Heart left ventricle (tissue), 16 donors: ENCODE measurements at regions of chr3 and their contacts with region 1.

Region 1: GRCh38 chr3:52056968-52057805 is 816 bp upstream of the DUSP7 start:
- DNase-seq: peak; percentile 99 to 100 (median 100)
- ATAC-seq: peak; percentile 87 to 94 (median 90)
- H3K4me3 ChIP-seq: peak overlapping the region; percentile 36 to 96 (median 66)
- H3K27ac ChIP-seq: peak overlapping the region; percentile 30 to 95 (median 90)
- H3K4me1 ChIP-seq: peaks cover 12 to 55% (median 31%) of the 10 kb centered on the region in 12 donors
- H3K27me3 ChIP-seq: no peaks in the 10 kb centered on the region
- CTCF ChIP-seq: peak in 3 of 12 donors; percentile 10 to 28 (median 17)
- POLR2A ChIP-seq: peak in 1 of 2 donors; percentile 68

Region 2: DNA sequence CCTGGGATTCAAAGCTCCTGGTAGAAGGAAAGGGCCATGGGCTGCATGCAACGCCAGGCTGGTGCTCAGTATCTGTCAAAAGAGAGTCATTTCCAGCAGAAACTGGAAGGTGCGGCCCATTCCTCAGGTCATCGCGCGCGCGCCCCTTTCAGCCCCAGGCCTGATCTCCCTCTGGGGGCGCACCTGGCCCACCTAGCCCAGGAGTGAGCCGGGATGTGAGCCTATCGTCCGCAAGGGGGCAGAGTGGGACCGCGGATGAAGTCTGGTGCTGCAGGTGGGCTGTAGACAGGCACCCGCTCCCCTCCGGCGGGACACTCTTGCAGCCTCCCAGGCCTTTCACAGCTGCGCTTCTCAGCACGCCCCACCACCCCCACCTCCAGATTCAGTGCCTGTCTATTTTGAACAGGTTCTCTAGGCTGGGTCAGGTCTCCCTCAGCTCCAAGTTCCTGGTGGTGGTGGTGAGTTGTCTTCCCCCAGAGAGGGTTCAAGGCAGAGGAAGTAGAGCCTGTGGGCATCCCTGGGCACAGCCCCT is 55.7 kb before region 1 on chr3:
- intact Hi-C with region 1: loop called (anchors 1 to 5 kb)
- DNase-seq: peak; percentile 69 to 88 (median 74)
- ATAC-seq: peak; percentile 35 to 67 (median 63)
- H3K4me3 ChIP-seq: no peak overlapping the region
- H3K27ac ChIP-seq: no peak overlapping the region
- H3K4me1 ChIP-seq: peaks cover 13 to 34% (median 31%) of the 10 kb centered on the region in 12 donors
- H3K27me3 ChIP-seq: no peaks in the 10 kb centered on the region
- CTCF ChIP-seq: peak; percentile 76 to 96 (median 90)
- POLR2A ChIP-seq: no peak

Region 3: GRCh38 chr3:52014613-52015012 is 42.6 kb before region 1 on chr3:
- intact Hi-C with region 1: loop called in 2 of 10 experiments (anchors 5 kb)
- DNase-seq: no peak
- ATAC-seq: no peak
- H3K4me3 ChIP-seq: no peak overlapping the region
- H3K27ac ChIP-seq: no peak overlapping the region
- H3K4me1 ChIP-seq: peaks cover 12 to 64% (median 34%) of the 10 kb centered on the region in 12 donors
- H3K27me3 ChIP-seq: no peaks in the 10 kb centered on the region
- CTCF ChIP-seq: peak in 4 of 12 donors; percentile 9 to 20 (median 18)
- POLR2A ChIP-seq: no peak

Region 4: GRCh38 chr3:52022323-52023100 is 34.7 kb before region 1 on chr3:
- intact Hi-C with region 1: loop called in 3 of 10 experiments (anchors 2 to 5 kb)
- DNase-seq: peak; percentile 72 to 85 (median 80)
- ATAC-seq: peak; percentile 16 to 60 (median 48)
- H3K4me3 ChIP-seq: peak overlapping the region; percentile 15 to 55 (median 36)
- H3K27ac ChIP-seq: peak overlapping the region; percentile 81 to 99 (median 93)
- H3K4me1 ChIP-seq: peaks cover 39 to 91% (median 79%) of the 10 kb centered on the region in 12 donors
- H3K27me3 ChIP-seq: no peaks in the 10 kb centered on the region
- CTCF ChIP-seq: no peak
- POLR2A ChIP-seq: no peak

Region 5: GRCh38 chr3:52108302-52109232 is 51.4 kb after region 1 on chr3:
- intact Hi-C with region 1: loop called in 7 of 10 experiments (anchors 2 to 5 kb)
- DNase-seq: peak; percentile 67 to 79 (median 73)
- ATAC-seq: peak; percentile 66 to 88 (median 81)
- H3K4me3 ChIP-seq: peak overlapping the region in 9 of 12 donors; percentile 4 to 37 (median 29)
- H3K27ac ChIP-seq: peak overlapping the region in 11 of 12 donors; percentile 45 to 85 (median 75)
- H3K4me1 ChIP-seq: peaks cover 4 to 40% (median 36%) of the 10 kb centered on the region in 12 donors
- H3K27me3 ChIP-seq: no peaks in the 10 kb centered on the region
- CTCF ChIP-seq: peak; percentile 20 to 73 (median 52)
- POLR2A ChIP-seq: no peak

Region 6: DNA sequence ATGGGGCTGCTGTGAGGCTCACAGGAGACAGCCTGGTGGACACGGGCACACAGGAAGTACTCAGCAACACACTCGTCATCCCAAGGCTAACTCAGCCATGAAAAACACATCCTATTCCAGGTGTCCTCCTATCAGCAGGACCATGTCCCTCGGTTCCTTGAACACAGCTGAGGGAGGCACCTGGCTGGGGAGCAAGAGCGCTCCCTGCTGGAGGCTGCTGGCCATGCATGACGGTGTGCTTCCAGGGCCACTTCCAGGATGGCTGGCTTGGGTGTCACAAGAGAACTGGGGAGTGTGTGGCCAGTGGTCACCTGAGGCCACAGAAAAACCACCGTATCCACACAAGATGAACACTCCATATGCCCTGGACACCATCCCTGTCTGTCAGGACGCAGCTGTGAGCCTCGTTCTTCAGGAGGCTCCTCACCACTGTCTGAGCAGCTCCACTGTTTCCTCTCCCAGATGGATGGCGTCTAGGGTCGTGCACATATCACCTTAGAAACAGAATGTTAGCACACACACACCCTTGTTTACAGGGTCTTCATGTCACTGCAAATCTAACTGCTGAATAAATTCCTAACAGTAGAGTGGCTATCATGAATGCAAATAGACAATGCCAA is 66.0 kb after region 1 on chr3:
- intact Hi-C with region 1: loop called (anchors 1 to 5 kb)
- DNase-seq: peak; percentile 75 to 88 (median 79)
- ATAC-seq: peak; percentile 86
- H3K4me3 ChIP-seq: no peak overlapping the region
- H3K27ac ChIP-seq: peak overlapping the region in 10 of 12 donors; percentile 65 to 89 (median 80)
- H3K4me1 ChIP-seq: peaks cover 6 to 50% (median 30%) of the 10 kb centered on the region in 12 donors
- H3K27me3 ChIP-seq: no peaks in the 10 kb centered on the region
- CTCF ChIP-seq: peak; percentile 88 to 99 (median 95)
- POLR2A ChIP-seq: no peak

Region 7: DNA sequence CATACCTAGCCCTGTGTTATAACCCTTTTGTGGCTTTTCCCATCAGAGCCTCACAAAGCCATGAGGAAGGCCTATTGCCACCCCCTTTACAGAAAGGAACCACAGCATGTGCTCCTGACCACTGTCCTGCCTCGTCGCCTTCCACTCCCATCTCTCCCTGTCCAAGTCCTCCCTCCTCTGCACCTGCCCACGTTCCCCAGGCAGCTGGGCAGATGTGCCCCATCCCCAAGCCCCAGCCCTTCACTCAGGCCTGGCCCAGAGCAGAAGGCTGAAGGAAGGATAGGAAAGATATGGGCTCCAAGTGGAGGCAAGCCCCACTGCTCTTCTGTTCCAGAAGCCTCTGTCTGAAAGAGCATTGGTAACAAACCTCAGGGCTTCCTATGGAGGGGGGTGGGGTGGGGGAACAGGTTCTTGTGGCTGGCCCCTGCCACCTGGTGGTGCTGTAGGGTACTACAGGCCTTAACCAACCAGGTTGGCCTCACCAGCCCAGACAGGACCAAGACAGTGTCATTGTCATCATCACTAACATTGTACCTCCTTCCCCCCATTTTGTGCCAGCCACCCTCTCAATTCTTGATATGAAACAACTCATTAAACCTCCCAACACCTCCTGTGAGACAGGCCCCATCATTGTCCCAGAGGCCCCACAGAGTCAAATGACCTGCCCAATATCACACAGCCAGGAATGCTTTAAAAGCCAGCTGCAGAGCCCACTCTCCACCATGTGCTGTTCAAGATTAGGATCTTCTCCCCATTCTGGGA is 87.0 kb after region 1 on chr3:
- intact Hi-C with region 1: loop called in 8 of 10 experiments (anchors 2 to 5 kb)
- DNase-seq: peak; percentile 86 to 89 (median 89)
- ATAC-seq: peak; percentile 38 to 81 (median 76)
- H3K4me3 ChIP-seq: no peak overlapping the region
- H3K27ac ChIP-seq: no peak overlapping the region
- H3K4me1 ChIP-seq: peaks cover 0 to 21% (median 6%) of the 10 kb centered on the region in 12 donors
- H3K27me3 ChIP-seq: no peaks in the 10 kb centered on the region
- CTCF ChIP-seq: peak; percentile 90 to 99 (median 98)
- POLR2A ChIP-seq: no peak

Region 8: DNA sequence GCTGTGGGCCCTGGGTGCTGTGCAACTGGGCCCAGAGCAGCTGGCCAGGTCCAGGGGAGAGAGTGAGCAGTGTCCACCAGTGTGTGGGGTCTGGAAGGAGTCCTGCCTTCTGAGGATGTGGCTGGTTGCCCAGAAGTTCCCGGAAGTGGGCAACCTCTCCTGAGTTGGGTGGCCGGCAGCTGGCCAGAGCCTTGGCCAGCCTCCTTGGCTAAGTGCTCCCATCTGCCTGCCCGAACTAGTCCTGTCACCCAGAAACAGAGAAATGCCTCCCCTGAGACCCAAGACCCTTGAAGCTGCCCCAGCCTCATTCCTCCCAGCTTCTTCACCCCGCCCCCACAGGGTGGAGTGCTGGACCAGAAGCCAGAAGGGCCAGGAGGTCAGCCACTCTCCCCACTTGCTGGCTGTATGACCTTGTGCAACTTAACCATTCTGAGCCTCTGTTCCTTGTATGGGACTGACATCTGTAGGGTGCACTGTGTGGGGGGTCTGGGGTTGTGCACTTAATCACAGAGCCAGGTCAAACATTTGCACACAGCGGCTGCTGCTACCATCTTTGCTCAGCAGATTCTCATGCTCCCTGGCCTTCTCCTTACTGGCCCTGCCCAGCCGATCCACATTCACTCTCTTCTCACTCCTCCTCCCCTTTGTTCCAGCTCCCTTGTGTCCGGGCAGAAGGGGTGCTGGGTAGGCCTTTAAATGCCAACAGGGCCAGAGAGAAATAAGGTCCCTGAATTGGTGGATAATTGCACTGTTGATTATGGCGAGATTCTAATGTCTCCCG is 133.3 kb after region 1 on chr3:
- intact Hi-C with region 1: no loop called
- DNase-seq: peak in 1 of 5 donors; percentile 55
- ATAC-seq: peak in 3 of 4 donors; percentile 15 to 39 (median 35)
- H3K4me3 ChIP-seq: no peak overlapping the region
- H3K27ac ChIP-seq: peak overlapping the region in 5 of 12 donors; percentile 19 to 42 (median 34)
- H3K4me1 ChIP-seq: peaks cover 0 to 32% (median 12%) of the 10 kb centered on the region in 12 donors
- H3K27me3 ChIP-seq: no peaks in the 10 kb centered on the region
- CTCF ChIP-seq: no peak
- POLR2A ChIP-seq: no peak